Transverse colon (tissue), 4 donors: ENCODE measurements at regions of chr14 and their contacts with region 1.

Region 1: GRCh38 chr14:105537369-105538164 is 11.2 kb downstream of the TMEM121 start:
- DNase-seq: peak; percentile 62
- H3K4me3 ChIP-seq: no peak overlapping the region
- H3K27ac ChIP-seq: no peak overlapping the region
- H3K4me1 ChIP-seq: no peaks in the 10 kb centered on the region
- H3K27me3 ChIP-seq: peaks cover 33% of the 10 kb centered on the region
- CTCF ChIP-seq: peak; percentile 68 to 99 (median 99)
- EP300 ChIP-seq: no peak
- POLR2A ChIP-seq: no peak

Region 2: DNA sequence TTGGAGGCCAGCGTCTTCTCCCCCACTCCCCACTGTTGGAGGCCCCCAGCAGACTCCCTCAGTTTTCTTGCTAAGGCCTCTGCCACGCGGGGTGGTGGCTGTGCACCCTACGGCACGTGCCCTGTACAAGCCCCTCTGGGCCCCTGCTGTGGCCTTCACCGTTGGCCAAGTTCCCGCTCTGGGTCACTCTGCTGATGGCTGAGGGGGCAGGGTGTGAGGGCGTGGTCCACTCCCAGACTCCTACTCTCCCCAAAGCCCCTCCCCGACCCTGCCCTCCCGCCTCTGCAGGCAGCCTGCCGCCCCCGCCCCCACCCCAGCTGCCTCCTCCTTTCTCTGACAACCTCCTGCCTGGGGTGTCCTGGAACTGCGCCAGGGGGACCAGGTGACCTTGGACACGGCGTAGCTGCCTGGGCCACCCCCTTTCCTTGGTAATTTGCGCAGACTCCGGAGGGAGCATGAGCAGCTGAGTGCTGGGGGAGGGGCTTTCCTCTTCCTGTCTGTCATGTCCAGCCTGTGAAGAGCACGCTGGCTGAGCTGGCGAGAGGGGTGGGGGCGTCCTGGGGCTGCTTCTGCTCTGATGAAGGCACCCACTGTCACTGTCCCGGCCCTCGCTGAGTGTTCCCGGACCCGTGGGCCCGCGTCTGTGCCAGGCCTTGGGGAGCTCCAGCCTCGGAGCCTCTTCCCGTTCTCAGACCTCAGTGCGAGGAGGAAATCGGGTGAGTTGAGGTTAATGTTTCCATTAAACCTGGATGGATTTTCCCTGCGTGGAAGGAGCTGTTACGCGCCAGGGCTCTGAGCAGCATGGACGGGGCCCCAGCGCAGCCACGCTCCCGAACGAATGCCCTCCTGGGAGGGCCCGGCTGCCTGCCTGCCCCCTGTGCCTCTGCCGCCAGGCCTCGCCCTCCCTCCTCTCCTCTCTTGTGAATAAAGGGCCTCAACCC is 1314.2 kb before region 1 on chr14:
- in situ Hi-C with region 1: no loop called
- intact Hi-C with region 1: no loop called
- DNase-seq: peak; percentile 38
- H3K4me3 ChIP-seq: peak overlapping the region in 2 of 4 donors; percentile 23 to 41
- H3K27ac ChIP-seq: peak overlapping the region in 3 of 4 donors; percentile 79 to 97 (median 91)
- H3K4me1 ChIP-seq: peaks cover 3 to 33% (median 23%) of the 10 kb centered on the region in 4 donors
- H3K27me3 ChIP-seq: no peaks in the 10 kb centered on the region
- CTCF ChIP-seq: no peak
- EP300 ChIP-seq: no peak
- POLR2A ChIP-seq: no peak

Region 3: GRCh38 chr14:105389976-105390848 is 147.4 kb before region 1 on chr14:
- in situ Hi-C with region 1: no loop called
- intact Hi-C with region 1: no loop called
- DNase-seq: no peak
- H3K4me3 ChIP-seq: no peak overlapping the region
- H3K27ac ChIP-seq: peak overlapping the region in 1 of 4 donors; percentile 15
- H3K4me1 ChIP-seq: no peaks in the 10 kb centered on the region
- H3K27me3 ChIP-seq: no peaks in the 10 kb centered on the region
- CTCF ChIP-seq: no peak
- EP300 ChIP-seq: no peak
- POLR2A ChIP-seq: no peak

Region 4: GRCh38 chr14:105473677-105474482 is 63.7 kb before region 1 on chr14:
- in situ Hi-C with region 1: no loop called
- intact Hi-C with region 1: no loop called
- DNase-seq: peak; percentile 75
- H3K4me3 ChIP-seq: peak overlapping the region; percentile 33 to 69 (median 57)
- H3K27ac ChIP-seq: peak overlapping the region; percentile 69 to 78 (median 76)
- H3K4me1 ChIP-seq: peaks cover 25 to 57% (median 44%) of the 10 kb centered on the region in 4 donors
- H3K27me3 ChIP-seq: peaks cover 50% of the 10 kb centered on the region
- CTCF ChIP-seq: no peak
- EP300 ChIP-seq: no peak
- POLR2A ChIP-seq: no peak

Region 5: DNA sequence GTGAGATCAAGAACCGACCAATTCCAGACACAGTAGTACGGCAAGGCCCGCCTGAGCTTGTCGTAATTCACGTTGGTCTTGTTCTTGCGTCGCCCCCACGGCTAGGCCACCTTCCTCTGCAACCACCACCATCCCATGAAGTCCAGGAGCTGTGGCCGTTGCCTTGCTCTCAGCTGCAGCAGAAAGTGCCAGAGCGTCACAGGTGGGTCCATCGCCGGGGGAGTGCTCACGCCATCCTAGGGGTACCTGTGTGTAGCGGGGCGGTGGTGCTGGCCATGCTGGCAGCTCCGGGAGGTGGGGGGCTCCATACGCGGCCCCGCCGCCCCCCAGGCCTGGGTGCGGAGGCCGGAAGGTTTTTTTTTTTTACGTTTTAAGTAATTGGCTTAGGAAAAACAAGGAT is 11.9 kb after region 1 on chr14:
- in situ Hi-C with region 1: no loop called
- intact Hi-C with region 1: loop called (anchors 1 kb)
- DNase-seq: no peak
- H3K4me3 ChIP-seq: no peak overlapping the region
- H3K27ac ChIP-seq: no peak overlapping the region
- H3K4me1 ChIP-seq: no peaks in the 10 kb centered on the region
- H3K27me3 ChIP-seq: peaks cover 4% of the 10 kb centered on the region
- CTCF ChIP-seq: no peak
- EP300 ChIP-seq: no peak
- POLR2A ChIP-seq: no peak